GM13977 (cell line): ENCODE measurements at regions of chr3 and their contacts with region 1.

Region 1: DNA sequence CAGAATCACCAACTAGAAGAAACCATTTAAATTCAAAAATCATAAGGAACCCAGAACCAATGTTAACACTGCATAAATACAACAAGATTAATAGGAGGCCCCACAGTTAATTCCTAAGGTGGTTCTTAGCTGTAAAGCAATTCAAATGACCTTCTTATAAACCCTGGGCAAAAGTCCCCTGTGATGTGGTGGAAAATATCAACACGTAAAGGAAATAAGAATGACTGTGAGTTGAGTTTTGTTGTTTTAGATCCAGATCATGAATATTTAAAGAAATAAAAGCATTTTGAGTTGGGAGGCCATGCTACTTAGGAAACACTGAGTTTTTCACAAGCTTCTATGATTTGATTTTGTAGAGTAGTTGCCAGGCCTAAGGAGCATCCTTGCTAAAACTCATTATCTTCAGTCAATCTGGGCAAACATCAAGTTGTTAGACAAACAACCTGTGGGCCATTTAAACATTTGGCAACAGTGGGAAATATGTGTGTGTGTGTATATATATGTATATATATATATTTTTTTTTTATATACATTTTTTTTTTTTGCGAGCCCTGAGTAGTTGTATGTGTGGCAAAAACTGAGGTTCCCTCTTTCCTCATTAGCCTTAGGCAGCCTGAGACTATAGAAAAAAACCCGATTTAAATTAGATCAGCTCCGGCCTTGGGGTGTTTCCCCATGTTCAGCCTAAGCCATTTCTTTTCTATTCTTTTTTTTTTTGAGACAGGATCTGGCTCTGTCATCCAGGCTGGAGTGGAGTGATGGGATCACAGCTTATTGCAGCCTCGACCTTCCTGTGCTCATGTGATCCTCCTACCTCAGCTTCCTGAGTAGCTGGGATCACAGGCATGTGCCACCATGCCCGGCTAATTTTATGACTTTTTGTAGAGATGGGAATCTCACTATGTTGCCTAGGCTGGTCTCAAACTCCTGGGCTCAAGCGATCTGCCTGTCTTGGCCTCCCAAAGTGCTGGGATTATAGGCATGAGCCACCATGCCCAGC is 8.0 kb upstream of the PXK start:
- DNase-seq: no peak
- CTCF ChIP-seq: no peak

Region 2: DNA sequence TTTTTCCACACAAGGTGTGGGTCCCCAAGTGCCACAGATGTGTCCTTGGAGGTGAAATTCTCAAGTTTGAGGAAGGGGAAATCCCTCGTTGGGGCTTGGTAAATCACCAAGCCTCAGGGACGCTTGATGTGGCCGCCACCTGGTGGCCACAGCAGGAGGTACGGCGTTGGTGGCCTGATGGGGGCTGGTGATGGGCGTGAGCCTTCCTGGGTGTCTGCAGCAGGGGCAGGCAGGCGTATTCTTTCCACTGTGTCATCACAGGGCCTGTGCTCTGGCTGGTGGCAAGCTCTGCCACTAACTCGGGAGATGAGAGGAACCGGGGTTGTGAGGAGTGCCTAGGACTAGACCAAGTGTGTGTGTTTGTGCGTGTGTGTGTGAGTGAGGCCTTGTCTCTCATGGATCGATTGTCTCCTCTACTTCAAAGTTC is 208.1 kb after region 1 on chr3:
- in situ Hi-C with region 1: loop called (anchors 5 kb)
- DNase-seq: peak; percentile 89
- CTCF ChIP-seq: peak; percentile 95

Region 3: DNA sequence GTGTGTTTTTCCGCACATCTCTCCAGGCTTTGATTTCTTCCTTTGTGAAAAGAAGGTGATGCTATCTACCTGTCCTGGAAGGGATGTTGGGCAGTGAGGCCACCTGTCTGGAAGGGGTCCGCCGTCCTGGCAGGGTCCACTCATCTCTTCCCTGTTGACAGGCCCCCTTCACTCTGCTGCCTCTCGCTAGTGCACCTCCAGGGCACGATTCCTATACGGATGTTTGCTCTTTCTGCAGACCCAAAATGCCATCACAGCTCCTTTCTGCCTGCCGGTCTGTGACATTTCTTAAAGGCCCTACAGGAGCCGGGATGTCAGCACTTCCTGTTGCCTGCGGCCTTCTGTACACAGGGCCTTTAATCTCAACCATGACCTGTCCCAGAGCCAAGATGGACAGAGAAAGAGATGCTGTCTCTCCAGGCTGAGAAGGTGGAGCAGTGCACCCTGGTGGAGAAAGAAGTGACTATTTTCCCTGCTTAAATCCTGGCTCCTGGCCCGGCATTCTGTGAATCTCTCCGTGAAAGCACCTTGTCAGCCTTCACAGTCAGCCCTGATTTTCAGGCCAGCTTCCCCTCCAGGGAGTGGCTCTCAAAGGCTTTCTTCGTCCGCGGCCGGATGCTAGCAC is 334.5 kb after region 1 on chr3:
- in situ Hi-C with region 1: no loop called
- DNase-seq: no peak
- CTCF ChIP-seq: no peak

Region 4: GRCh38 chr3:58848826-58849225 is 524.1 kb after region 1 on chr3:
- in situ Hi-C with region 1: no loop called
- DNase-seq: no peak
- CTCF ChIP-seq: no peak